Vagina (tissue), 2 donors: ENCODE measurements at regions of chr15 and their contacts with region 1.

Region 1: DNA sequence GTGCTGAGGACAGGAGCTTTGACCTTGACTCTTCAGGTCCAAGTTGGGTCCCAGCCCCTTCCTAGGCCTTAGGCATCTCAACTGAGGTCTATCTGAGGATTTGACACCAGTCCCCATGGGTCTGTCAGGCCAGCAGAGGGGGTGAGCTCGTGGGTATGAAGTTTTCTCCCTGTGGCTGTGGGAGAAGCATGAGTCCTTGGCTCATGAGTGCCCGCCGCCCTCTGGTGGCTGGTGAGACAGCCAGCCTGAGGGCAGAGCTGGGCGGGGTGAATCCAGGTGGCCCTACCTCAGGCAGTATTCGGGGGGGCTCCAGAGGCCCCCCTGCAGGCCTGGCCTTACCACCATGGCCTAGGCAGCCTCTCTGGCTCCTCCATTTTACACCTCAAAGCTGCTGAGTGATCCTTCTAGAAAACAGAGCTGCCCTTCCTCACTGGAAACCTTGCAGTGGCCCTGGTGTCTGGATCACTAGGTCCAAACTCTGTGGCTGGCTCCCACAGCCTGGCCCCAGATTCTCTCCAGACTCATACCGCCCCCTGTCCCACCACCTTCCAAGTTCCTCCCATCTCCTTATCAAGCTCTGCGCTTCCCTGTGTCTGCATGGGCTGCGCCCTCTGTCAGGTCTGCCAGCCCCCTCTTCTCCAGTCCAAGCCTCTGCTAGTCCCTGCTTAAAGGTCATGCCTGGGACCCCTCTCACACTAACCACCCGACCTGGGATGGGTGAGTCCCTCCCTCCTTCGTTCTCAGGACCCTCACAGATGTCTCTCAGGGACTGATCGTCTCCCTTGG is 16.1 kb downstream of the SH2D7 start:
- DNase-seq: no peak
- H3K4me3 ChIP-seq: no peak overlapping the region
- H3K27ac ChIP-seq: no peak overlapping the region
- H3K4me1 ChIP-seq: no peaks in the 10 kb centered on the region
- H3K27me3 ChIP-seq: no peaks in the 10 kb centered on the region
- CTCF ChIP-seq: peak; percentile 95 to 98 (median 98)
- POLR2A ChIP-seq: no peak

Region 2: GRCh38 chr15:77966540-77967290 is 141.8 kb before region 1 on chr15:
- intact Hi-C with region 1: loop called (anchors 2 kb)
- DNase-seq: no peak
- H3K4me3 ChIP-seq: no peak overlapping the region
- H3K27ac ChIP-seq: no peak overlapping the region
- H3K4me1 ChIP-seq: no peaks in the 10 kb centered on the region
- H3K27me3 ChIP-seq: no peaks in the 10 kb centered on the region
- CTCF ChIP-seq: peak; percentile 61 to 85 (median 66)
- POLR2A ChIP-seq: no peak

Region 3: DNA sequence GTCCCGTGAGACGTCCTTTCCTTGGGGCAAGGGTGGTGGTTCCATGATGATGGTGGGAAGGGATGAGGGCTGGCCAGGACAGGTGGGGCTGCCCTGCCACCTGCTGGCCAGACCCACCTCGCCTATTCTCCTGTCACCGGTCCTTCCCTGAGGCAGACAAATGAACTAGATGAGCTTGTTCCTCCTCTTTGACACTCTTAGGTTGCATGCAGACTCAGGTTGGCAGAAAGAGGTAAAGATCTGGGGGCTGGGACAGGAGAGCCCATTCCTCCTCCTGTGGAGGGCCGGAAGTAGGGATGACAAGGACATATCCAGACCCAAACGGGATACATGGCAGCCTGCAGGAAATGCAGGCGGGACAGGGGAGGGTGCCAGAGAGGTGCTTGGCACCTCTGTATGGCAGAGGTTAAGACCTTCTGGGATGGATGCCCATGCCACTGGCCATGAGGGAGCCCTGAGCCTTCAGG is 87.3 kb after region 1 on chr15:
- intact Hi-C with region 1: loop called (anchors 5 kb)
- DNase-seq: no peak
- H3K4me3 ChIP-seq: no peak overlapping the region
- H3K27ac ChIP-seq: no peak overlapping the region
- H3K4me1 ChIP-seq: no peaks in the 10 kb centered on the region
- H3K27me3 ChIP-seq: no peaks in the 10 kb centered on the region
- CTCF ChIP-seq: peak; percentile 55 to 61 (median 57)
- POLR2A ChIP-seq: no peak

Region 4: DNA sequence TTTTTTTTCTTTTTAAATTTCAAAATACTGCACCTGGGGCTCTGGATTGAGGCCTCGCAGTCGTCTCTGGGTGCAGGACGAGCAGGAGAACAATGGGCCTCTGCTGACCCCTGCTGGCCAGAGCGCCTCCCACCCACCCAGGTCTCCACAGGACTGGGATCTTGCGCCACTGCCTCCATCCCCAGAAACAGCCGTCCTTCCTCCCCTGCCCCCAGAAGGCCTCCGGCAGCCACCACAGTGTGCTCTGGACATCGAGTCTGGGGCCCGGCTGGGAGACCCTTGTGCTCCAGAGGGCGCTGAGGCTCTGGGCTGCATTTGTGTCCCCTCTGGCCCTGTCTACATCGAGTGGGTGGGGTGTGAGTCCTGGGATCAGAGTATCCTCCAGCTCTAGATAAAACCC is 132.5 kb after region 1 on chr15:
- intact Hi-C with region 1: loop called (anchors 5 kb)
- DNase-seq: no peak
- H3K4me3 ChIP-seq: no peak overlapping the region
- H3K27ac ChIP-seq: no peak overlapping the region
- H3K4me1 ChIP-seq: no peaks in the 10 kb centered on the region
- H3K27me3 ChIP-seq: no peaks in the 10 kb centered on the region
- CTCF ChIP-seq: peak; percentile 73 to 98 (median 83)
- POLR2A ChIP-seq: no peak